ENCODE measurements at regions of chr19 and their contacts with region 1.

Region 1: GRCh38 chr19:15555759-15556633 is 47.7 kb downstream of the CYP4F22 start:
- DNase-seq: peak; percentile 88 to 92
- ATAC-seq: peak; percentile 92 to 96 (median 94)
- H3K4me3 ChIP-seq: peak overlapping the region in 8 of 10 donors; percentile 8 to 39 (median 32)
- H3K27ac ChIP-seq: no peak overlapping the region
- H3K4me1 ChIP-seq: peaks cover 3 to 21% (median 16%) of the 10 kb centered on the region in 9 donors
- H3K27me3 ChIP-seq: peaks cover 0 to 59% (median 30%) of the 10 kb centered on the region in 7 donors
- CTCF ChIP-seq: peak; percentile 64 to 81 (median 75)

Region 2: DNA sequence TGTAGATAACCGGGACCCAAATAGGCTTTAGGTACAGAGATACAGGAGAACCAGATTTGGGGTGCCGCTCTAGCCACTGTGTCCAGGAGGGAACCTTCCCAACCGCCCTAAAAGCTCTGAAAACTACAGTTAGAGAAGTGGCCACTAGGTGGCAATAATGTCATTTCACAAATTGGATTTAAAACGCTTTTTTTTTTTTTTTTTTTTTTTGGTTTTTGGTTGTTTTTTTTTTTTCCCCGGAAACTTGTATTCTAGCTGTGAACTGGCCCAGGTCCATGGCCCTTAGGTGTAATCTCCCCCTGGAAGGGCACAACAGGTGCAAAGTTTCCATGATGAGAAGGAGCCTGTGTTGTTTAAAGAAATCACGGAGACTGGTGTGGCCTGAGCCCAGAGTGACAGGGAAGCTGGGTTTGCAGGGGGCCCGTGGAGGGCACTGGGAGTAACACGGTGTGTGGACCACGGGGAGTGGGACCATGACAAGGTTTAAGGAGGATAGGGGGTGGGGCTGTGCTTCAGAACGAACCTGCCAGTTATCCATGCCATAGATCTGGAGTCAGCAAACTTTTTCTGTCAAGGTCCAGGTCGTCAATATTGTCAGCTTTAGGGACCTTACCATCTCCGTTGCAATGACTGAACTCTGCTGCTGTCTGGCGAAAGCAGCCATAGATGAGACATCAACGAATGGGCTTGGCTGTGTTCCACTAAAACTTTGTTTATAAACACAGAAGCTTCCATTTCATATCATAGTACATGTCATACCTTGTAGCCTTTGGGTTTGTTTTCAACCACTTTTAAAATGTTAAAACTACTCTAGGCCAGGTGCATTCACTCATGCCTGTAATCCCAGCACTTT is 463.9 kb before region 1 on chr19:
- intact Hi-C with region 1: loop called (anchors 1 to 5 kb)
- DNase-seq: peak; percentile 15 to 70
- ATAC-seq: peak in 7 of 8 donors; percentile 41 to 64 (median 57)
- H3K4me3 ChIP-seq: no peak overlapping the region
- H3K27ac ChIP-seq: no peak overlapping the region
- H3K4me1 ChIP-seq: peaks cover 0 to 6% (median 0%) of the 10 kb centered on the region in 9 donors
- H3K27me3 ChIP-seq: peaks cover 0 to 20% (median 6%) of the 10 kb centered on the region in 7 donors
- CTCF ChIP-seq: peak; percentile 52 to 76 (median 72)

Region 3: DNA sequence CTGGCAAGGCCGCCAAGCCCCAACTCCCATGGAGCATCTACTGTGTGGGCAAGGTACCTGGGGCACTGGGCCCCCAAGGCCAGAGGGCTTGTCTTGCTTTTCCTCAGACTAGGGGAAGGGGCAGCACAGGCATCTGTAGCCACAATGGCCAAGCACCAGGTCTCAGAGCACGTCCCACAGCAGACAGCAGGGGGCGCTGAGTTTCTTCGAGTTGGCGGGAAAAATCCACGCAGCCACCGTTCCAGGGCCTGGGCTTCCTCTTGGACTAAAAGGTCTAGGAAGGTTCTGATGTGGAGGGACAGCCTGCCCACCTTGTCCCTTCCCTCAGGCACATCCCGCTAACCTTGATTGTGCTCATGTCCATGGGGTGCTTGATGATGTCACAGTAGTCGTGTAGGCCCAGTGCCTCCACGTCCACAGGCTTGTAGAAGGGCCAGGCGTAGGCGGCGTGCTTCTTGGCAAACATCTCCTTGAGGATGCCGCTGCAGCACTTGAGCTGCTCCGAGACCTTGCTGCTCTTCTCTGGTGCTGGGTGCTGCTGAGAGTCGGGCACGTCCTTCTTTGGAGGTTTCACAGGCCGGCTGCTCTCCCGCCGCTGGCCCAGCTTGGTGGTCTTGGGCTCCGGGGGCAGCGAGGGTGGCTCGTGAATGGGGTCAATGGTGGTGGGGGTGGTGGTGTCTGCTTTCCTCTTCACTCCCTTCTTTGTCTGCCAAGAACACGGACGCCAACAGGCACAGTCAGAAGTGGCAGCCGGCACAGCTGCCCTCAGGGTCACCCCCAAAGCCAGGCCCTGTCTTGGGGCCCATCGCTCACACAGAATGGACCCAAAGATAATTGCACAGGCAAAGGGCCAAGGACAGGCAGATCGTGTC is 291.7 kb before region 1 on chr19:
- intact Hi-C with region 1: loop called (anchors 5 to 10 kb)
- DNase-seq: peak; percentile 75 to 76
- ATAC-seq: peak; percentile 9 to 52 (median 42)
- H3K4me3 ChIP-seq: no peak overlapping the region
- H3K27ac ChIP-seq: peak overlapping the region in 9 of 10 donors; percentile 41 to 81 (median 56)
- H3K4me1 ChIP-seq: peaks cover 27 to 64% (median 59%) of the 10 kb centered on the region in 9 donors
- H3K27me3 ChIP-seq: no peaks in the 10 kb centered on the region
- CTCF ChIP-seq: peak; percentile 51 to 85 (median 81)

Region 4: GRCh38 chr19:15379083-15379995 is 176.7 kb before region 1 on chr19 and contains the start of gene AKAP8:
- intact Hi-C with region 1: loop called in 1 of 10 experiments (anchors 10 kb)
- DNase-seq: peak; percentile 98 to 99
- ATAC-seq: peak; percentile 94 to 97 (median 97)
- H3K4me3 ChIP-seq: peak within 1 kb of the TSS; percentile 58 to 99 (median 90)
- H3K27ac ChIP-seq: peak within 1 kb of the TSS; percentile 93 to 99 (median 98)
- H3K4me1 ChIP-seq: peaks cover 26 to 50% (median 47%) of the 10 kb centered on the region in 9 donors
- H3K27me3 ChIP-seq: no peaks in the 10 kb centered on the region
- CTCF ChIP-seq: no peak
- total RNA-seq, gene AKAP8: 15.7 to 32.2 (median 18.6) TPM

Region 5: DNA sequence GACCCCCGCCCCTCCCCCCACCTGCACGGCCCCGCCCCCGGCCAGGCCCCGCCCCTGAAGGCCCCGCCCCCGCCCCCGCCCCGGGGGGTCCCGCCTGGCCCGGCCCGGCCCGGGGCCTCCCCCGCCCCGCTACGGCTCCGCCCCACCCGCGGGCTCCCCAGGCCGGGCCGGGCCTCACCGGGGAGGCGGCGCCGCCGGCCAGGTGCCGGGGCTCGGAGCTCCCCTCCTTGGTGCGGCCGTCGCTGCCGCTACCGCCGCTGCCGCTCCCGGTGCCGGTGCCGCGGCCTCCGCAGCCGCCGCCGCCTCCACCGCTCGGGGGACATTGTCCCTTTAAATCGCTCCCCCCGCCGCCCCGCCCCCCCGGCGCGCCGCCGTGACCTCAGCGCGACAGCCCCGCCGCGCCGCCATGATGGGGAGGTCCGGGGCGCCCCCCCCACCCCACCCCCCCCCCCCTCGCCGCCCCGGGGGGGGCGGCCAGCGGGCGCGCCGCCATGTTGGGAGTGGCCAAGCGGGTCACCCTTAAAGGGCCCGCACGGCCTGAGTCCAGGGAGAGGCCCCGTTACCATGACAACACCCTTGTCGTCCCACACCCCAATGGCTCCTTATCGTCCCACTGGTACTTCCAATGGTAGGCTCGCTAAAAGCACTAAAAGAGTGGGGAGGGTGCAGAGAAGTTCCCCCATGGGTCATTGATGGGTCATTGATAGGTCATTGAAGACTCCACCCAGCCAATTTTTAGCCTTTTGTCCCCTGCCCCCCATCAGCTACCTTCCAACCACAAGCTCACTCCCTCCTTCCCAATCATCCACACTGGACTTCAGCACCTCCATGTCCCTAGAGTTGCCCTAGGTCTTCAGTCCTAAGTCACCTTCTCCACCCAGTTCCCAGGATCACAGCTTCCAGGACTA is 106.1 kb before region 1 on chr19 and contains the start of gene WIZ:
- intact Hi-C with region 1: loop called in 3 of 10 experiments (anchors 5 to 10 kb)
- DNase-seq: peak; percentile 89 to 92
- ATAC-seq: peak in 6 of 8 donors; percentile 8 to 42 (median 24)
- H3K4me3 ChIP-seq: peak within 1 kb of the TSS; percentile 62 to 97 (median 77)
- H3K27ac ChIP-seq: peak within 1 kb of the TSS; percentile 78 to 93 (median 86)
- H3K4me1 ChIP-seq: peaks cover 12 to 44% (median 34%) of the 10 kb centered on the region in 9 donors
- H3K27me3 ChIP-seq: peaks cover 0 to 13% (median 6%) of the 10 kb centered on the region in 7 donors
- CTCF ChIP-seq: no peak
- total RNA-seq, gene WIZ: 19.5 to 34.3 (median 21.3) TPM

Region 6: GRCh38 chr19:15511671-15512424 is 44.1 kb before region 1 on chr19:
- intact Hi-C with region 1: no loop called
- DNase-seq: no peak
- ATAC-seq: no peak
- H3K4me3 ChIP-seq: no peak overlapping the region
- H3K27ac ChIP-seq: no peak overlapping the region
- H3K4me1 ChIP-seq: peaks cover 0 to 15% (median 4%) of the 10 kb centered on the region in 9 donors
- H3K27me3 ChIP-seq: peaks cover 0 to 53% (median 49%) of the 10 kb centered on the region in 7 donors
- CTCF ChIP-seq: no peak

Region 7: GRCh38 chr19:15584541-15585115 is 28.6 kb after region 1 on chr19:
- intact Hi-C with region 1: no loop called
- DNase-seq: peak; percentile 70 to 83
- ATAC-seq: peak; percentile 66 to 90 (median 76)
- H3K4me3 ChIP-seq: no peak overlapping the region
- H3K27ac ChIP-seq: no peak overlapping the region
- H3K4me1 ChIP-seq: peaks cover 0 to 14% (median 0%) of the 10 kb centered on the region in 9 donors
- H3K27me3 ChIP-seq: peaks cover 0 to 64% (median 46%) of the 10 kb centered on the region in 7 donors
- CTCF ChIP-seq: peak; percentile 59 to 92 (median 84)

Region 8: DNA sequence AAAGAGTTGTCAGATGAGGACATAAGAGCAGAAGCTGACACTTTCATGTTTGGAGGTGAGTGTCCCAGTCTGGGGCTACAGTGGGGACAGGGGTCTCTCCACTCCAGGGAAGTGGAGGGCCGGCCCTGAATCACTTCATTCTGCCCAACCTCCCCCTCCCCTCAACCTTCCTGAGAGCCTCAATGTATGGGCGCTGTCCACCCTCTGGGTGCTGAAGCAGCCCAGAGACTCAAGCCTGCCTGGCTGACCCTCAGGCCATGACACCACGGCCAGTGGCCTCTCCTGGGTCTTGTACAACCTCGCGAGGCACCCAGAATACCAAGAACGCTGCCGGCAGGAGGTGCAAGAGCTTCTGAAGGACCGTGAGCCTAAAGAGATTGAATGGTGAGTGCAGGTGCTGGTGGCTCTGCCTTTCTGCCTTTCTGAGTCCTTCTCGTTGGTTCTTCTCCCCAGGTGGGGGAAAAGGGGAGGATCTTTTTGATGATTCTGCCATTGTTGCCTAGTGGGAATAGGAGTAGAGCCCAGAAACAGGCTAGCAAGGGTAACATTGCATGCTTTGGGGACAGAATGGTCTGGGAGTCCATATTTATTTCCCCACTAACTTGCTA is 67.8 kb after region 1 on chr19:
- intact Hi-C with region 1: no loop called
- DNase-seq: no peak
- ATAC-seq: no peak
- H3K4me3 ChIP-seq: no peak overlapping the region
- H3K27ac ChIP-seq: no peak overlapping the region
- H3K4me1 ChIP-seq: no peaks in the 10 kb centered on the region
- H3K27me3 ChIP-seq: peaks cover 0 to 64% (median 26%) of the 10 kb centered on the region in 7 donors
- CTCF ChIP-seq: no peak